ENCODE measurements at regions of chr16 and their contacts with region 1.

Region 1: DNA sequence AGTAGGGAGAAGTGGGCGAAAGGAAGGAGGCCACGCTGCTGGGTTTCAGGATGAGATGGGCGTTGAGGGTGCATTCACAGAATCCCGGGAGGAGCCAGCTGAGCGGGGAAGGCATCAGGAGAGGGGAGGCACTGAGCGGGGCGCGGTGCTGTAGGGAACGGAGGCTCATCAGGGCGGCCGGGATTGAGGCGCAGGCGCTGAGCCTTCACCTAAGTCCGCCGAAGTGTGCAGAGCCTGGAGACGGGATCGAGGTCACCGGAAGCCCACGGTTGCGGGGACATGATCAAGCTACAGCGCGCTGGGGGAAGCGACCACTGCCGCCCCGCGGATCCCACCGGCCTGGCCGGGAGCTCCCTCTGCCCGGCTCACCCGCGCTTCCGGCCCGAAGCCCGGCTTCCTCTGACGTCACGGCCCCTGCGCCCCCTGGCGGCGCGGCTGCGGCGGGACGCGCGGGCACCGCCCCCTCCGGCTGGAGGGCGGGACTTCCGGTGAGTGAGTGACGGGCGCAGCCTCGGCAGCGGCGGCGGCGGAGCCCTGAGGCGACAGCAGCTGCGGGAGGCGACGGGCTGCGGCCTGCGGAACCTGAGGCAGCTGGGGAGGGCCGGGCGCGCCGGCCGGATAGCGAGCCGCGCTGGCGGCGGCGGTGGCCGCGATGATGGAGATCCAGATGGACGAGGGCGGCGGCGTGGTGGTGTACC is at the start of gene MAPK8IP3:
- DNase-seq: peak; percentile 87 to 95
- ATAC-seq: peak; percentile 89 to 96 (median 93)
- H3K4me3 ChIP-seq: peak within 1 kb of the TSS; percentile 68 to 100 (median 90)
- H3K27ac ChIP-seq: peak within 1 kb of the TSS; percentile 80 to 98 (median 94)
- H3K4me1 ChIP-seq: peaks cover 17 to 49% (median 36%) of the 10 kb centered on the region in 9 donors
- H3K27me3 ChIP-seq: no peaks in the 10 kb centered on the region
- CTCF ChIP-seq: peak; percentile 89 to 99 (median 98)
- total RNA-seq, gene MAPK8IP3: 61.3 to 96.0 (median 71.7) TPM

Region 2: DNA sequence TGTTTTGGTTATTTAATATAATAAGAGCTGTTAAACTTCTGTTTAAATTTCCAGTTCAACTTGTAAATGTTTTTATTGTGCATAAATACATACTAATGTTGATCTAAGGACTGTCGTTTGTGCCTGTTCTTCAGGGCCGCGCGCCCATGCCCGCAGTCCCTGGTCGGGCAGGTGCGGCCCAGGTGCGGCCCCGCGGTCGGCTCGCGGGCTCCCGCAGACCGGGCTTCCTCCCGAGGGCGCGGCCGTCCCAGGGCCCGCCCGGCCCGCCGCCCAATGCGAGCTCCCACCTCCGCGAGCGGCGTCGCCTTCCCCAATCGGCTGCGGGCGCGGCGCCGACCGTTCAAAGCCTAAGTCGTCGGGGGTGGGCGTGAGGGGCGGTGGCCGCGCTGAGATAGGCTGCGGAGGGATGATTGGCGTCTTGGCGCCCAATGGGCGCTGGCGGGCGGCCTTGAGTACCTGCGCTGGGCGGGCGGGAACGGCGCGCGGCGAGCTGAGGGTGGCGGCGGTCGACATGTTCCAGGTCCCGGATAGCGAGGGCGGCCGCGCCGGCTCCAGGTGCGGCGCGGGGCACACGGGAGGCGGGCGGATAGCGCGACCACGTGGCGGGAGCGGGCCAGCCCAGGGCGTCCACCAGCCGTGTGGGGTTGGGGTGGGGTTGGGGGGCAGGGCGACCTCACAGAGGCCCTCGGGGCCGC is 27.9 kb before region 1 on chr16 and contains the start of gene JPT2:
- intact Hi-C with region 1: loop called in 1 of 10 experiments (anchors 2 kb)
- DNase-seq: peak; percentile 97
- ATAC-seq: peak; percentile 97 to 99 (median 98)
- H3K4me3 ChIP-seq: peak within 1 kb of the TSS; percentile 64 to 85 (median 77)
- H3K27ac ChIP-seq: peak within 1 kb of the TSS; percentile 2 to 85 (median 76)
- H3K4me1 ChIP-seq: peaks cover 3 to 15% (median 6%) of the 10 kb centered on the region in 9 donors
- H3K27me3 ChIP-seq: no peaks in the 10 kb centered on the region
- CTCF ChIP-seq: peak in 2 of 9 donors; percentile 7 to 13
- total RNA-seq, gene JPT2: 20.2 to 57.5 (median 32.2) TPM

Region 3: DNA sequence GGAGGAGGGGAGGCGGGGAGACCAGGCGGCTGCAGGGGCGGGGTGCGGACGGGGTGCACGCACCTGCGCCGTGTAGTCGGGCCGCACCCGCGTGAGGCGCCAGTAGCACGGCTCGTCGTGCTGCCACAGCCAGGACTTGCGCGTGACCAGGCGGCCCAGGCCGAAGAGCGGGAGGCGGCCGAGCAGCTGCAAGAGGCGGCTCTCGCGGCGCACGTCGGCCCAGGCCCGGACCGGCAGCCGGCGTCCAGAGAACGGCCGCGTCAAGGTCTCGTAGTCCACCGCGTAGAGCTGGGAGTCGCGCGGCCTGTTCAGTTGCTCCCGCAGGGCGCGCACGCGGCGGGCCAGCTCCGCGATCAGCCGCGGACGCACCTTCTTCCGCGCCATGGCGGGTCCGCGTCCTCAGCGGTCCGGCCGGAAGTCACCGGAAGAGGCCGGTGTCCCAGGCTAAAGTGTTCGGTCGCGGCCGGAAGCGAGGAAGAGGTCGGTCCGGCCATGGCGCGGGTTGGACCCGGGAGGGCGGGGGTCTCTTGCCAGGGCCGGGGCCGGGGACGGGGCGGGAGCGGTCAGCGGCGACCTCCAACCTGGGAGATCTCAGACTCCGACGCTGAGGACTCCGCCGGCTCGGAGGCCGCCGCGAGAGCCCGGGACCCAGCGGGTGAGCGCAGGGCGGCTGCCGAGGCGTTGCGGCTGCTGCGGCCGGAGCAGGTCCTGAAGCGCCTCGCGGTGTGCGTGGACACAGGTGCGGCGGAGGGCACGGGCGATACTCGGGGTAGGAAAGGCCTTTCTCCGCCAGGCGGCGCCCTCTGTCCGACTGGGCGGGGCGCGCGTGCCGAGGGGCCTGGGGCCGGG is 67.1 kb after region 1 on chr16 and contains the starts of genes EME2 and MRPS34:
- intact Hi-C with region 1: loop called in 2 of 10 experiments (anchors 5 kb)
- DNase-seq: peak; percentile 79 to 86
- ATAC-seq: peak; percentile 51 to 78 (median 66)
- H3K4me3 ChIP-seq: peak within 1 kb of the TSS; percentile 88 to 100 (median 98)
- H3K27ac ChIP-seq: peak within 1 kb of the TSS; percentile 89 to 99 (median 97)
- H3K4me1 ChIP-seq: peaks cover 27 to 46% (median 39%) of the 10 kb centered on the region in 9 donors
- H3K27me3 ChIP-seq: no peaks in the 10 kb centered on the region
- CTCF ChIP-seq: peak; percentile 35 to 86 (median 73)
- total RNA-seq, gene EME2: 4.9 to 13.8 (median 7.3) TPM
- total RNA-seq, gene MRPS34: 57.8 to 94.9 (median 76.2) TPM